ENCODE measurements at regions of chr5 and their contacts with region 1.

Region 1: GRCh38 chr5:175718401-175719108 is 60.7 kb downstream of the HRH2 start:
- DNase-seq: peak; percentile 67
- H3K4me3 Mint-ChIP-seq: no peak overlapping the region
- H3K27ac Mint-ChIP-seq: no peak overlapping the region
- H3K4me1 Mint-ChIP-seq: no peaks in the 10 kb centered on the region
- H3K27me3 Mint-ChIP-seq: peaks cover 2% of the 10 kb centered on the region

Region 2: GRCh38 chr5:175696139-175696854 is 22.3 kb before region 1 on chr5:
- CTCF ChIA-PET with region 1: interaction called, 10 read pairs
- POLR2A ChIA-PET with region 1: no interaction called
- DNase-seq: peak; percentile 81
- H3K4me3 Mint-ChIP-seq: no peak overlapping the region
- H3K27ac Mint-ChIP-seq: peak overlapping the region; percentile 2
- H3K4me1 Mint-ChIP-seq: peaks cover 21% of the 10 kb centered on the region
- H3K27me3 Mint-ChIP-seq: no peaks in the 10 kb centered on the region

Region 3: DNA sequence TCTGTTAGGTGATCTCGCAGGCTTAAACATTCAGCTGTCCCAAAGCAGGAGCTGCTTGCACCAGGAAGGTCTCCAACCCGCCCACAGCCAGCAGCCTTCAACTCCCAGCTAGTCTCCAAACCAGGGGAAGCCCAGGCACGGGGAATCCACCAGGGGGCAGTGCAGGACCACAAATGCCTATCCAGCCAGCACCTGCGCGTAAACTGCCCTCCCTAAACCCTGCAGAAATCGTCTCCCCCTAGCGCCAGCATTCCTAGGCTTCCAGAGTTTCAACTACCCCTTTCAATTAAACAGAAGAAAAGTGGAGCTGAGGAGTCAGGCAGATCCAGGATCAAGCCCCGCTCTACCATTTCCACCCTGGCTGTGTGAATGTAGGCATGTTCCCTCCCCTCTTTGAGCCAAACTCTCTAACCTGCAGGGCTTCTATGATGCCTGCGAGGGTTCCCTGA is 11.3 kb after region 1 on chr5:
- CTCF ChIA-PET with region 1: interaction called, 29 read pairs
- POLR2A ChIA-PET with region 1: no interaction called
- DNase-seq: peak; percentile 91
- H3K4me3 Mint-ChIP-seq: no peak overlapping the region
- H3K27ac Mint-ChIP-seq: no peak overlapping the region
- H3K4me1 Mint-ChIP-seq: peaks cover 3% of the 10 kb centered on the region
- H3K27me3 Mint-ChIP-seq: peaks cover 10% of the 10 kb centered on the region

Region 4: GRCh38 chr5:175837171-175837699 is 118.7 kb after region 1 on chr5:
- CTCF ChIA-PET with region 1: no interaction called
- POLR2A ChIA-PET with region 1: no interaction called
- DNase-seq: no peak
- H3K4me3 Mint-ChIP-seq: no peak overlapping the region
- H3K27ac Mint-ChIP-seq: no peak overlapping the region
- H3K4me1 Mint-ChIP-seq: no peaks in the 10 kb centered on the region
- H3K27me3 Mint-ChIP-seq: no peaks in the 10 kb centered on the region

Region 5: GRCh38 chr5:175922192-175922885 is 203.8 kb after region 1 on chr5:
- CTCF ChIA-PET with region 1: no interaction called
- POLR2A ChIA-PET with region 1: no interaction called
- DNase-seq: no peak
- H3K4me3 Mint-ChIP-seq: no peak overlapping the region
- H3K27ac Mint-ChIP-seq: no peak overlapping the region
- H3K4me1 Mint-ChIP-seq: peaks cover under 1% of the 10 kb centered on the region
- H3K27me3 Mint-ChIP-seq: no peaks in the 10 kb centered on the region